ENCODE measurements at regions of chr15 and their contacts with region 1.

Region 1: DNA sequence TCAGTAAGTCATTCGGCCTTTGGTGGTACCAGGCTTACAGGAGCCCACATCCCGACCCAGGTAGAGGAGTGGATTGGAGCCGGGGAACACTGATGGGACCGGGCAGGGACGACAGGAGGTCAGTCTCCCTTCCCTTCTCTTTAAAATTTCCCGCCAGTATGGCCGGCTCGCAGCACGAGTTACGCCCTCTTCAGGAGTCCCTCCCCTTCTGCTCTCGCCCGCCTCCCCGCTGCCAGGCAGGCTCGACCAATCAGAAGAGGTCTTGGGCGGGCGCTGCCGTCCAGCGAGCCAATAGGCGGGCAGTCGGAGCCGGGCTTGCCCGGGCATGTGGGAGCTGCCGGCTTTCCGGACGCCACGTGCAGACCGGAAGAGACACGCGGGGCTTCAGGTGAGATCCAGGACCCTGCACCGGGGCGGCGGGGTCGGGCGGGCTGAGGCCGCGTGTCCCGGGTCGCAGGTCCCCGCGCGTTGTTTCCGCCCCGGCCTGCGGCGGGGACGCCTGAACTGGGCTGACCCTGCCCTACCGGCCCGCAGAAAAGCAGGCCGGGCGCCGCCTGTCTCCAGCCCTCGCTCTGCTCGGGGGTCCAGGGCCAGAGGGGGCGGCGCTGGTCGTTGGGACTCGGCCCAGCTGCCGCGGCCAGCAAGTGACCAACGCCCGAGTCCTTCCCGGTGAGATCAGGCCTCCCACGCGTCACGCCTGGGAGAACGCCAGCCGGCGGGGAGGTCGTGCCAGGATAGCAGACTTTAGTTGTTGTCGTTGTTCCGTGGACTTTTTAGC is at the start of gene AEN:
- DNase-seq: peak; percentile 92 to 96 (median 95)
- ATAC-seq: peak; percentile 94
- H3K4me3 ChIP-seq: peak within 1 kb of the TSS; percentile 76
- H3K4me3 Mint-ChIP-seq: peak within 1 kb of the TSS; percentile 84 to 97 (median 90)
- H3K27ac ChIP-seq: peak within 1 kb of the TSS; percentile 90
- H3K27ac Mint-ChIP-seq: peak within 1 kb of the TSS; percentile 81 to 100 (median 94)
- H3K4me1 ChIP-seq: peaks cover 33 to 36% of the 10 kb centered on the region in 2 donors
- H3K4me1 Mint-ChIP-seq: peaks cover 23 to 49% (median 44%) of the 10 kb centered on the region in 7 donors
- H3K27me3 ChIP-seq: no peaks in the 10 kb centered on the region
- H3K27me3 Mint-ChIP-seq: peaks cover 0 to 7% (median 0%) of the 10 kb centered on the region in 5 donors
- total RNA-seq, gene AEN: 29.6 to 52.1 (median 44.2) TPM

Region 2: GRCh38 chr15:88467073-88467934 is 153.9 kb before region 1 on chr15 and contains the starts of genes MRPL46 and MRPS11:
- CTCF ChIA-PET with region 1: no interaction called
- POLR2A ChIA-PET with region 1: interaction called, 3 read pairs
- intact Hi-C with region 1: loop called (anchors 1 kb)
- DNase-seq: peak; percentile 78 to 94 (median 91)
- ATAC-seq: peak; percentile 97
- H3K4me3 ChIP-seq: peak within 1 kb of the TSS; percentile 75
- H3K4me3 Mint-ChIP-seq: peak within 1 kb of the TSS; percentile 87 to 98 (median 97)
- H3K27ac ChIP-seq: peak within 1 kb of the TSS; percentile 95
- H3K27ac Mint-ChIP-seq: peak within 1 kb of the TSS; percentile 96 to 99 (median 98)
- H3K4me1 ChIP-seq: peaks cover 0 to 19% of the 10 kb centered on the region in 2 donors
- H3K4me1 Mint-ChIP-seq: peaks cover 18 to 42% (median 29%) of the 10 kb centered on the region in 7 donors
- H3K27me3 ChIP-seq: no peaks in the 10 kb centered on the region
- H3K27me3 Mint-ChIP-seq: no peaks in the 10 kb centered on the region
- total RNA-seq, gene MRPL46: 9.2 to 32.1 (median 28.5) TPM
- total RNA-seq, gene MRPS11: 12.8 to 55.7 (median 24.0) TPM

Region 3: DNA sequence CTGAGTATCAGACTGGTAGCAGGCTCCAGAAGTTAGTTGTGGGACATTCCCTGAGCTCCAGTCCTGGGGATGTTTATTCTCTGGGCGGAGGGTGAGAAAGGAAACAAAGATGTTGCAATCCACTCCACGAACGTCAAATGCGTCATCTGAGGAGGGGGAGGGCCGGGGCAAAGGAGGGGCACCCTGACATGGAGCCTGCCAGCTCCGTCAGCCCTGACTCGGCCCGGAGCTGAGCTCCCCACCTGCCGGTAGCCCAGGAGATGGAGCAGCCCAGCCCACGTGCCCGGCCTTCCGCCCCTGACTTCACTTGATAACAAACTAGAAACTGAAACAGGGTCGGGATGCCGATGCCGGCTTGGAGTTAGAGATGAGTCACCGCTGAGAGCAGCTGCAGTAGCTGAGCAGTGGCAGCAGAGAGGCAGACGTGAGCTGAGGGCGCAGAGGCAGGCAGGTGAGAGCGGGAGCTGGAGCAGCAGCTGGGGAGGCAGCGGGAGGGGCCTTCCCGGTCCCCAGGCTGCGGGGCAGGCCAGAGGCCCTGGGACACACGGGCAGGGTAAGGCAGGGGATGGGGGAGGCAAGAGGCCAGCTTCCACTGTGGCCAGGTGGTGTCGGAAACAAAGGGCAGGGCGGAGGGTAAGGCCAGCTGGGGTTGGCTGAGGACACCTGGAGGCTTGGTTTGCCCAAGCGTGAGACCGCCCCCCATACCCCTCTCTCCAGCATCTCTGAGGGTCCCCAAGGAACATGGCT is 17.6 kb after region 1 on chr15 and contains the start of gene ISG20:
- CTCF ChIA-PET with region 1: interaction called, 16 read pairs
- POLR2A ChIA-PET with region 1: interaction called, 51 read pairs
- intact Hi-C with region 1: no loop called
- DNase-seq: peak; percentile 84 to 100 (median 99)
- ATAC-seq: peak; percentile 94
- H3K4me3 ChIP-seq: peak within 1 kb of the TSS; percentile 70
- H3K4me3 Mint-ChIP-seq: peak within 1 kb of the TSS; percentile 83 to 99 (median 94)
- H3K27ac ChIP-seq: peak within 1 kb of the TSS; percentile 99
- H3K27ac Mint-ChIP-seq: peak within 1 kb of the TSS; percentile 96 to 100 (median 99)
- H3K4me1 ChIP-seq: peaks cover 76 to 81% of the 10 kb centered on the region in 2 donors
- H3K4me1 Mint-ChIP-seq: peaks cover 58 to 87% (median 80%) of the 10 kb centered on the region in 7 donors
- H3K27me3 ChIP-seq: no peaks in the 10 kb centered on the region
- H3K27me3 Mint-ChIP-seq: peaks cover 0 to 2% (median 0%) of the 10 kb centered on the region in 5 donors
- total RNA-seq, gene ISG20: 92.5 to 160 (median 149) TPM

Region 4: DNA sequence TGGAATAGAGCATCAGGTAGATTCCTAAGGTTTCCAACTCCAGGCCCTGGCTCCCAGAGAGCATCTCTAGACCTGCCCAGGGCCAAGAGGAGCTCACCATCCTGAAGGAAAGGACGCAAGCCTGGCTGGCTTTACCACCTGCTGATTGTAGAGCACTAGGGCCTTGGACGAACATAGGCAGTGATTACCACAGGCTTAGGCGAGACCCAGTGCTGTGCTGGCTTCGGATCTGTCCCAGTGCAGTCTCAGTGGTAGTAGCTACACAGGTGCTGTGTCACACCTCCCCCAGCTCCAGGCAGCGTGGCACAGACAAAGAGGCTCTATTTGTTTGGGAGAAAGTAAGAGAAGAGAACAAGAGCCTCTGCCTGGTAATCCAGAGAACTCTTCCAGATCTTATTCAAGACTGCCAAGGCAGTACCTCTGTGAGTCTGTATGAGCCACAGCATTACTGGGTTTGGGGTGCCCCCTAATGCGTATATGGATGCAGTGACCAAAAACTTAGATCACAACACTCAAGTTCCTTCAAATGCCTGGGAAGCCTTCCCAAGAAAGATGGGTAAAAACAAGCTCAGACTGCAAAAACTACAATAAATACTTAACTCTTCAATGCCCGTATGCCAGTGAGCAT is 43.1 kb after region 1 on chr15:
- CTCF ChIA-PET with region 1: interaction called, 59 read pairs
- POLR2A ChIA-PET with region 1: interaction called, 7 read pairs
- intact Hi-C with region 1: loop called (anchors 1 kb)
- DNase-seq: peak in 7 of 9 donors; percentile 60 to 75 (median 67)
- ATAC-seq: peak; percentile 84
- H3K4me3 ChIP-seq: no peak overlapping the region
- H3K4me3 Mint-ChIP-seq: no peak overlapping the region
- H3K27ac ChIP-seq: no peak overlapping the region
- H3K27ac Mint-ChIP-seq: peak overlapping the region in 8 of 9 donors; percentile 52 to 84 (median 66)
- H3K4me1 ChIP-seq: peaks cover 0 to 34% of the 10 kb centered on the region in 2 donors
- H3K4me1 Mint-ChIP-seq: peaks cover 6 to 52% (median 32%) of the 10 kb centered on the region in 7 donors
- H3K27me3 ChIP-seq: no peaks in the 10 kb centered on the region
- H3K27me3 Mint-ChIP-seq: peaks cover 0 to 10% (median 8%) of the 10 kb centered on the region in 5 donors

Region 5: DNA sequence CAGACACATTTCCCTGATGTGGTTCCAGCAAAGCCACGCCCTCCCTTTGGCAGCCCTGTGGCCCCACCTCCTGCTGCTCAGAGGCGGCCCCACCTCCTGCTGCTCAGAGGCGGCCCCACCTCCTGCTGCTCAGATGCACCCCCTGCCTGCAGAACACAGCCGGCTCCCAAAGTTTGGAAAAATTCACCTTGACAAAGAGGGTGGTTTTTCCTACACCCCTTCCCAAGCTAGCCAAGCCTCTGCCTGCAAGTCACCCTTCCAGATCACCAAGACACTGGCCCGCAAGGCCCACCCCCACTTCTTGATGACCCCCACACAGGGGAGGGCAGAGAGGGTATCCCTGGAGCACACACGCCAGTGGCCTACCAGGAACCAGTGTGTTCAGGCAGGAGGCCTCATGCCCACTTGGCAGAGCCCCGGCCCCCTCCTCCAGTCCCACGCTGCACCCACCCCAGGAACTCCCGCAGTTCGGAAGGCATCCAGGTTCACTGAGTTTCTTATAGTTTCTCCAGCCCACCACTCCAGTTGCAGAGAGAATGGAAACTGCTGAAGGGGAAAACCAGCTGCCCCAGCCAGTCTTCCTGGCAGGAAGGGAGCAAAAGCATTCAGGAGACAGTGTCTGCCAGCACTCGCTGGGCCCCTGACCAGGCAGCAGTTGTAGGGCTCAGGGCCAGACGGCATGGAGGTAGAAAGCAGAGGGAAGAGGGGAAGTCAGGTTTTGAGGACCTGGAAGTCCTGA is 276.4 kb after region 1 on chr15:
- CTCF ChIA-PET with region 1: no interaction called
- POLR2A ChIA-PET with region 1: interaction called, 3 read pairs
- intact Hi-C with region 1: loop called (anchors 2 kb)
- DNase-seq: peak in 8 of 9 donors; percentile 74 to 85 (median 80)
- ATAC-seq: peak; percentile 75
- H3K4me3 ChIP-seq: peak overlapping the region; percentile 32
- H3K4me3 Mint-ChIP-seq: peak overlapping the region; percentile 24 to 83 (median 60)
- H3K27ac ChIP-seq: no peak overlapping the region
- H3K27ac Mint-ChIP-seq: peak overlapping the region in 8 of 9 donors; percentile 20 to 97 (median 80)
- H3K4me1 ChIP-seq: peaks cover 27 to 38% of the 10 kb centered on the region in 2 donors
- H3K4me1 Mint-ChIP-seq: peaks cover 28 to 62% (median 51%) of the 10 kb centered on the region in 7 donors
- H3K27me3 ChIP-seq: no peaks in the 10 kb centered on the region
- H3K27me3 Mint-ChIP-seq: no peaks in the 10 kb centered on the region

Region 6: DNA sequence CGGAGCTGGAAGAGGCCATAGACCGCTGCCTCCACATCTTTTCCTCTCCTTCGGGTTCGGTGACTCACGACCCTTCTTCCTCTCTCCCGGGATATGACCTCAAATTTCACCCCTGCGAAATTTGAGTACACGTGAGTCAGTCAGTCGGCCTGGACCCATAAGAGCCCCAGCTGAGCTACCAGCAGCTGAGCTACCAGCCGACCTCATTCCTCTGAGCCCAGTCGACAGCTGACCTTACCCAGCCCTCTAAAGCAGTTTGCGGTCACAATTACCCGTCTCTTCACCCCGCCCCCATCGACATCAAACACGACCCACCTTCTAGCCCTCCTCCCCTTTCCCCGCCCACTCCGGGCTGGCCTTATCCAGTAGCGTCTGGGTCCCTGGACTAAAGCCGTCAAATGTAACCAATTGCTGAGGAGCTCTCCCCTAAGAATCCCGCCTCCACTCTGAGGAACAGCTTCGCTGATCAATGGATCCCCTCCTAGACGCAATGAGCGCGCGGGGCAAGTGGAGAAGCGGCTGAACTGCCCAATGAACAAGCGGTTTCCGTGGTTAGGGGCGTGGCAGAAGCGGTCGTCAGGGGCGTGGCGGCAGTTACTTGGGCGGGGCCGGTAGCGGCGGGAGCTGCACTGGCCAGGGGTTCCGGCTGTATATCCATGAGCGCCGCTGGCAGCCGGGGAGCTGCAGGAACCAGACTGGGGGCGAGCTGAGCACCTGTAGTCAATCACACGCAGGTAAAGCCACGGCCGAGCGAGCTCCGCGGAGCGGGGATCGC is 466.8 kb after region 1 on chr15 and contains the start of gene ABHD2:
- CTCF ChIA-PET with region 1: no interaction called
- POLR2A ChIA-PET with region 1: no interaction called
- intact Hi-C with region 1: loop called (anchors 2 to 5 kb)
- DNase-seq: peak; percentile 93 to 99 (median 97)
- ATAC-seq: peak; percentile 97
- H3K4me3 ChIP-seq: peak within 1 kb of the TSS; percentile 78
- H3K4me3 Mint-ChIP-seq: peak within 1 kb of the TSS in 1 of 10 donors; percentile 8
- H3K27ac ChIP-seq: peak within 1 kb of the TSS; percentile 81
- H3K27ac Mint-ChIP-seq: peak within 1 kb of the TSS in 7 of 9 donors; percentile 90 to 100 (median 97)
- H3K4me1 ChIP-seq: peaks cover 26 to 29% of the 10 kb centered on the region in 2 donors
- H3K4me1 Mint-ChIP-seq: peaks cover 30 to 43% (median 32%) of the 10 kb centered on the region in 7 donors
- H3K27me3 ChIP-seq: no peaks in the 10 kb centered on the region
- H3K27me3 Mint-ChIP-seq: no peaks in the 10 kb centered on the region
- total RNA-seq, gene ABHD2: 43.6 to 85.0 (median 67.7) TPM

Region 7: GRCh38 chr15:89334510-89335288 is 713.5 kb after region 1 on chr15 and contains the start of gene POLG:
- CTCF ChIA-PET with region 1: no interaction called
- POLR2A ChIA-PET with region 1: no interaction called
- intact Hi-C with region 1: loop called (anchors 5 to 10 kb)
- DNase-seq: peak; percentile 92 to 100 (median 99)
- ATAC-seq: peak; percentile 95
- H3K4me3 ChIP-seq: peak within 1 kb of the TSS; percentile 91
- H3K4me3 Mint-ChIP-seq: peak within 1 kb of the TSS; percentile 88 to 98 (median 95)
- H3K27ac ChIP-seq: peak within 1 kb of the TSS; percentile 82
- H3K27ac Mint-ChIP-seq: peak within 1 kb of the TSS; percentile 93 to 100 (median 100)
- H3K4me1 ChIP-seq: peaks cover 44 to 48% of the 10 kb centered on the region in 2 donors
- H3K4me1 Mint-ChIP-seq: peaks cover 28 to 55% (median 51%) of the 10 kb centered on the region in 7 donors
- H3K27me3 ChIP-seq: no peaks in the 10 kb centered on the region
- H3K27me3 Mint-ChIP-seq: peaks cover 0 to 9% (median 4%) of the 10 kb centered on the region in 5 donors
- total RNA-seq, gene POLG: 121 to 136 (median 129) TPM

Measured in naive thymus-derived CD4-positive, alpha-beta T cell (primary cell).